Left cardiac atrium (tissue), 4 donors: ENCODE measurements at regions of chr6 and their contacts with region 1.

Region 1: GRCh38 chr6:35583893-35584688 is 71.4 kb upstream of the TULP1 start:
- DNase-seq: peak; percentile 59
- ATAC-seq: peak; percentile 80 to 84

Region 2: GRCh38 chr6:35522660-35523658 is 61.1 kb before region 1 on chr6:
- intact Hi-C with region 1: loop called in 1 of 2 experiments (anchors 10 kb)
- DNase-seq: peak; percentile 78
- ATAC-seq: peak; percentile 87 to 94

Region 3: DNA sequence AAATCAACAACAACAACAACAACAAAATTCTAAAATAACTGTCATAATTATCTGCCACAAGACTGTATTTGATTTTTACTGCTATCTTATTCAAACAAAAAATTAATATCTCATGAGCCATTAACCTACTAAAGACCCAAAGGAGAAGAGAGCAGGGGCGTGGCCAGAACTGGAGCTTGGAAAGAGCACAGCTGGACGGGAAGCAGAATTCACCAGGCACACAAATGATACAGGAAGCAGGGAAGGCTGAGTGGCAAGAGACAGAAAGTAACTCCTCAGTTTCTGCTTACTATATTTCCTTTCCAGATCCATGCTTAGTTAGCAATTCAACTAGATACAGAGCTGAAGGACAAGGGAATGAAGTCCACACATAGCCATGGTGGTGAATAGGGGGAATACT is 50.2 kb after region 1 on chr6:
- intact Hi-C with region 1: loop called in 1 of 2 experiments (anchors 10 kb)
- DNase-seq: peak; percentile 34
- ATAC-seq: peak; percentile 53 to 69

Region 4: DNA sequence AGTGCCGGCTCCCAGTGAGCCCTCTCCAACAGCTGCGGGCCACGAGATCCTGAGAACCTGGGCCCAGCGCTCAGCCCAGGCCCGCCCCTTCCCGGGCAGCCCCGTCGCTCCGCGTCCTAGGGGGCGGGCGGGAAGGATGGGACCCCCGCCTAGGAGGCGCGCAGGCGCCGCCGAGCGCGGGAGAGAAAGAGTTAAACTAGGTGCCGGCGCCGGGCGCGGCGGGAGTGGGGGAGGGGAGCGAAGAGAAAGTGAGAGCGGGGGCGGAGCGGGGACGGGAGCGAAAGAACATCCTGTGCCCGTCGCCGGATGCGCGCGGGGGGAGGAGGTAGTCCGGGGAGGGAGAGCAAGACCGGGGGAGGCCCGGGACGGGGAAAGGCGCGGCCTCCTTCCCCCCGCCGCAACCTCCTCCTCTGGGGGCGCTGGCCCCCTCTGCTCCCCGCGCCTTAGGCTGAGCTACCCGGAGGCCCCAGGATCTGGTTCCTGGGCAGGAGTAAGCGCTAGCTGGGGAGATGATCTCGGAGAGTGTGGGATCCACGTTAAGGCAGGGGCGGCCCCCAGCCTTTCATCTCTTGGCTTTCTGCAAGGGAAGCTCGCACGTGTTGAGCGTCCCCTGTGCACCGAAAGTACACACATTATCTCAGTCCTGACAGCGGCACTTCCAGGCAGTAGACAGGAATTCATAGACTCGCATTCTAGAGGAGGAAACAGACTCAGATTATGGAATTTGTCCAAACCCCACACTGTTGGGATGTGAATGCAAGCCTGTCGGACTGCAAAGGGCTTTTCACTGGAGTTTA is 147.8 kb after region 1 on chr6:
- intact Hi-C with region 1: loop called (anchors 1 to 2 kb)
- DNase-seq: peak; percentile 97
- ATAC-seq: peak; percentile 66 to 71

Region 5: GRCh38 chr6:35737413-35738211 is 153.5 kb after region 1 on chr6:
- intact Hi-C with region 1: loop called (anchors 1 to 2 kb)
- DNase-seq: no peak
- ATAC-seq: peak; percentile 83 to 84

Region 6: GRCh38 chr6:35948725-35949124 is 364.6 kb after region 1 on chr6:
- intact Hi-C with region 1: no loop called
- DNase-seq: no peak
- ATAC-seq: no peak